ENCODE measurements at regions of chr12 and their contacts with region 1.

Region 1: DNA sequence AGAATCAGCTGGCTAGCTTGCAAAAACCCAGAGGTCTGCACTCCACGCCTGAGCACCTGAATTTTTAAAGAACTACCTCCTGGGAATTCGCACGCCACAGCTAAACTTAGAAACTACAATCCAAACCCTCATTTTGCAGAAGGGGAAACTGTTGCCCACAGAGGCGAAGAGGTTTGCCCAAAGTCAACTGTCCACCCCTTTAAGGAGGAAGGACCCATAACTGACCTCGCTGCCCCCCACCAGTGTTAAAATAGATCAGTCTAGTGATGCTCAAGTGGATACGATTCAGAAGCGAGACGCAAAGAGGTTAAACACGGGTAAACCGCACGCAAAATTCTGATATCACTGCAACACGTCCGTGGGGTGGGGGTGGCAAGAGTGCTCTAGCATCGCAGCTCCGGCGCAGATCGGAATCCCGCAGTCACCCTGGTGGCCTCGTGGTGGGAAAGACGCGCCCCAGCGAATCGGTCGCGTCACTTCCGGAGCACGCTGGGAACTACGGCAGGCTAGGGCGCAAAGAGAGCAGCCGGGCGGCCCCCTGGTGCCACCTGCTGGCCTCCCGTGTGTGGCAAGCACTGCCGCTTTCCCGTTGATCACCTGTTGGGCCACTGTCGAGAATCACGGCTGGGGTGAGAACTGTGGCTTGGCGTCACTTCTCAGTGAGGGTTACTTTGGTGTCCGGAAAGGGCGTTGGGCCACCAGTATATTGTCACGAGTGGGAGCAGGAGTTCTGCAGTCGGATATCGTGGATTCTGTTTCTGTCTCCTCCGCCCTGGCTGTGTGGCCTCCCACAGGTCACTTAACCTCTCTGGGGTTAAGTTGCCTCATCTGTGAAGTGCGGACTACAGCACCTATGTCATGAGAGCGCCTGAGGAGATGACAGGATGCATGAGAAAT is at the start of gene ALKBH2:
- DNase-seq: peak; percentile 94 to 95 (median 95)
- H3K4me3 ChIP-seq: peak within 1 kb of the TSS; percentile 42 to 70 (median 46)
- H3K4me3 Mint-ChIP-seq: peak within 1 kb of the TSS; percentile 77 to 87
- H3K27ac ChIP-seq: peak within 1 kb of the TSS; percentile 13 to 68
- H3K27ac Mint-ChIP-seq: peak within 1 kb of the TSS; percentile 75 to 92 (median 86)
- H3K4me1 ChIP-seq: peaks cover 23 to 28% of the 10 kb centered on the region in 2 donors
- H3K4me1 Mint-ChIP-seq: peaks cover 22% of the 10 kb centered on the region
- H3K27me3 ChIP-seq: no peaks in the 10 kb centered on the region
- H3K27me3 Mint-ChIP-seq: peaks cover 0 to 2% (median 0%) of the 10 kb centered on the region in 3 donors
- CTCF ChIP-seq: peak; percentile 98
- polyA plus RNA-seq, gene ALKBH2: 3.7 to 13.0 (median 4.5) TPM

Region 2: GRCh38 chr12:108618079-108618952 is 475.0 kb before region 1 on chr12:
- intact Hi-C with region 1: loop called (anchors 10 kb)
- DNase-seq: peak; percentile 68 to 77 (median 76)
- H3K4me3 ChIP-seq: no peak overlapping the region
- H3K4me3 Mint-ChIP-seq: no peak overlapping the region
- H3K27ac ChIP-seq: peak overlapping the region in 1 of 2 donors; percentile 7
- H3K27ac Mint-ChIP-seq: peak overlapping the region; percentile 37 to 94 (median 87)
- H3K4me1 ChIP-seq: peaks cover 48 to 60% of the 10 kb centered on the region in 2 donors
- H3K4me1 Mint-ChIP-seq: peaks cover 50% of the 10 kb centered on the region
- H3K27me3 ChIP-seq: no peaks in the 10 kb centered on the region
- H3K27me3 Mint-ChIP-seq: peaks cover 0 to 2% (median 0%) of the 10 kb centered on the region in 3 donors
- CTCF ChIP-seq: peak; percentile 99

Region 3: DNA sequence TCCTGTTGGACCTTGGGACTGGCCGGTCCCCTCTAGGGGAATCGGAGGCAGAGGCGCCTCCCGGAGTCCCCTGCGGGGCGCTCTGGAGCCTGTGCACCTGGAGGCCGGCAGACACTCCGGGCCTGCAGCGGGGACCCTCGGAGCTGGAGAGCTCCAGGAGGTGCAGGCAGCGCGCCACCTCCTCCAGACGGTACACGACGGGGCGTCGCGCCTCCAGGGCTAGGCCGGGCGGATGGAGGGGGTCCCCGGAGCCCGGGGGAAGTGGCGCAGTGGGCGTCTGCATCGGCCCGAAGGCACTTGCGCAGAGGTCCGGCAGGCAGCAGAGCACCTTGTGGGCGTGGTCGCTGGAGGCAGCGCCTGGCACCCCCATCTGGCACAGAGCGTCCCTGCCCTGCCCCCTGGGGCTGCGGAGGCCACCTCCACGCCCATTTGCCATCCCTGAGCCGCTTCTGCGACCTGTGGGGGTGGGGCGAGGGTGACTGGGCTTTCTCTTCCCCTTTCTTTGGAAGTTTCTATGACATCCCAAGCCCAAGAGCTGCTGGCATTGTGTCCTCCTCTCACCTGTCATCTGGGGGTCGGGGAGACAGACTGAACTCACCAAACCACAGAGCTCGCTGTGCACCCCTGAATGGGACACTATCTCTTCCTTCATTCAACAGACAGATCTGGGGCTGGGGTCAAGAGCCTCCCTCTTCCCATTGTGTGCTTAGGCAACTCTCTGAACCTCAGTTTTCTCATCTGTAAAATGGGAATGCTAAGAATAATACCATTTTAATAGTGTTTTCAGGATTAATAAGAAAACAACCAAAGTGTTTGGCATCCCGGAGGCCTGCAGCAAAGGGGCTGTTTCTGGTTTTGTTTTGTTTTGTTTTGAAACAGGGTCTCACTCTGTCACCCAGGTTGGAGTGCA is 324.4 kb before region 1 on chr12:
- intact Hi-C with region 1: no loop called
- DNase-seq: peak; percentile 47 to 73 (median 63)
- H3K4me3 ChIP-seq: peak overlapping the region in 2 of 3 experiments; percentile 10 to 66
- H3K4me3 Mint-ChIP-seq: peak overlapping the region; percentile 60 to 86
- H3K27ac ChIP-seq: no peak overlapping the region
- H3K27ac Mint-ChIP-seq: peak overlapping the region in 2 of 7 donors; percentile 70 to 80
- H3K4me1 ChIP-seq: peaks cover 12 to 14% of the 10 kb centered on the region in 2 donors
- H3K4me1 Mint-ChIP-seq: peaks cover 8% of the 10 kb centered on the region
- H3K27me3 ChIP-seq: no peaks in the 10 kb centered on the region
- H3K27me3 Mint-ChIP-seq: peaks cover 0 to 10% (median 9%) of the 10 kb centered on the region in 3 donors
- CTCF ChIP-seq: peak; percentile 21

Region 4: GRCh38 chr12:108816652-108817335 is 276.5 kb before region 1 on chr12:
- intact Hi-C with region 1: loop called in 1 of 2 experiments (anchors 10 kb)
- DNase-seq: no peak
- H3K4me3 ChIP-seq: no peak overlapping the region
- H3K4me3 Mint-ChIP-seq: no peak overlapping the region
- H3K27ac ChIP-seq: no peak overlapping the region
- H3K27ac Mint-ChIP-seq: peak overlapping the region in 5 of 7 donors; percentile 28 to 67 (median 58)
- H3K4me1 ChIP-seq: peaks cover 33 to 36% of the 10 kb centered on the region in 2 donors
- H3K4me1 Mint-ChIP-seq: peaks cover 34% of the 10 kb centered on the region
- H3K27me3 ChIP-seq: no peaks in the 10 kb centered on the region
- H3K27me3 Mint-ChIP-seq: peaks cover 0 to 1% (median 0%) of the 10 kb centered on the region in 3 donors
- CTCF ChIP-seq: no peak

Region 5: DNA sequence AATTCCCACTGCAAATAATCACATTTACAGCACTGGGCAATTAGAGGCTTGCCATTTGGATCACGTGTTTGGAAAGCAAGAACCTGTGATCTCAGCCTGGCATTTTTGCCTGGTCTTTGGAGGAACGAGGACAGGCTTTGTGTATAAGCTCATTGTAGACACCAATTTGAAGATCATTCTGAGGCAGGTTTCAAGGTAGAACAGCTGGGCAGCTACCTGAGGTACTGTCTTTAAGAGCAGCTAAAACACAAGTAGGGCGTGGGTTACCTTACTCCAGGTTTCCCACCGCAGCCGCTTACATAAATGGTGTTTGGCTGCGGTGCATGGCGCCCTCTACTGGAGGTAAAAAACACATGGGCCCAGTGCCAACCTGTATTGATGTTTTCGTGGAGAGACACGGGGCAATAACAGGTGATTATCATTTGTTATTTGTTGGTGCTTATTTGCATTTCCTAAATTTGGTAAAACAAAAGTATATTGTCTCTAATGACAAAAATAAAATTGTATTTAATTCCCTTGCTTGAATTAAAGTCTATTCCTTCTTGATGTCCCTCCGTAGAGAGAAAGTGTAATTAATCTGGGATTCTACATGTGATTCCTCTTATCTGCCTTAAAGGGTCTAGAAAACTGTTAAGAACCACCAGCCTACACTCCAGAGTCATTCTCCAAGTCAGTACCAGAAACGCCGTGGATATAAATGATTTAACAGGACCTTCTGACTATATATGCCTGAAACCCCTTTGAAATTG is 142.1 kb before region 1 on chr12:
- intact Hi-C with region 1: loop called in 1 of 2 experiments (anchors 10 kb)
- DNase-seq: peak; percentile 61 to 74 (median 66)
- H3K4me3 ChIP-seq: no peak overlapping the region
- H3K4me3 Mint-ChIP-seq: no peak overlapping the region
- H3K27ac ChIP-seq: no peak overlapping the region
- H3K27ac Mint-ChIP-seq: peak overlapping the region in 4 of 7 donors; percentile 18 to 45 (median 30)
- H3K4me1 ChIP-seq: peaks cover 21 to 29% of the 10 kb centered on the region in 2 donors
- H3K4me1 Mint-ChIP-seq: peaks cover 25% of the 10 kb centered on the region
- H3K27me3 ChIP-seq: no peaks in the 10 kb centered on the region
- H3K27me3 Mint-ChIP-seq: peaks cover 7 to 10% (median 10%) of the 10 kb centered on the region in 3 donors
- CTCF ChIP-seq: peak; percentile 97

Region 6: GRCh38 chr12:109165599-109165998 is 72.3 kb after region 1 on chr12:
- intact Hi-C with region 1: no loop called
- DNase-seq: peak in 2 of 3 donors; percentile 20 to 24
- H3K4me3 ChIP-seq: no peak overlapping the region
- H3K4me3 Mint-ChIP-seq: no peak overlapping the region
- H3K27ac ChIP-seq: no peak overlapping the region
- H3K27ac Mint-ChIP-seq: peak overlapping the region in 4 of 7 donors; percentile 26 to 76 (median 58)
- H3K4me1 ChIP-seq: peaks cover 10 to 12% of the 10 kb centered on the region in 2 donors
- H3K4me1 Mint-ChIP-seq: peaks cover 25% of the 10 kb centered on the region
- H3K27me3 ChIP-seq: no peaks in the 10 kb centered on the region
- H3K27me3 Mint-ChIP-seq: no peaks in the 10 kb centered on the region
- CTCF ChIP-seq: no peak

Region 7: DNA sequence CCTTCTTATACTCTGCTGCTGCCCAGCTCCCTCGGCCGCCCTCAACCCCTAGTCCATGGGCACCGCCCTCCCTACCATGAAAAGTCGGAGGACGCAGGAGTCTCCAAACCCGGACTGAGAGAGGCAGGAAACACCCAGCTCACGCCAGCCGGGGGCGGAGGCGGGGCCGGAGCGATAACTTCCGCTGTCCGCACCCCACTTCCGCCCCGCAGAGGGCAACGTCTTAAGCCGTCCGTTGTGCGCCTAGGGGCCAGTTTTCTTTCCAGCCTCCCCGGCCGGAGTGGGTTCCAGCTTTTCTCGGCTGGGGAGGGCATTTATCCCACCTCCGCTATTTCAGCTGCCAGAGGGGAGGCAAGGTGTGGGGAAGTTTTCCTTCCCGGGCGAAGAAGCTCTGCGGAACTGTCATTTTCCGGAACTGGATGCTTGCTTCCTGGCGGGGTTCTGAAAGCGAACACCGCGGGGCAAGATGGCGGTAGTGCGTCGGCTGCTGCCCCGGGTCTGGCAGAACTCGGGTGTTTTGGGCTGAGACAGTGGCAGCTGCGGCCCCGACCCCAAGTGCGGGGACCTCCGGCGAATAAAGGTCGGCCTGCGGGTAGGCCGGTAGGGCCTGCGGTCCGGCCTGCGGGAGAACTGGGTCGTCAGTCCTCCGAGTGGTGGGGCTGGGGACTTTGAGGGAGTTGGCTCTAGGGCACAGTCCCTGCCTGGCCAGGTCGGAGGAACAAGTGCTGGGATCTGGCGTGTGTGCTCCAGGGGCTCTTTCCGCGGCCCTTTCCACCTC is 384.1 kb after region 1 on chr12 and contains the starts of genes KCTD10 and UBE3B:
- intact Hi-C with region 1: loop called in 1 of 2 experiments (anchors 5 kb)
- DNase-seq: peak; percentile 88 to 90 (median 88)
- H3K4me3 ChIP-seq: peak within 1 kb of the TSS; percentile 74 to 95 (median 81)
- H3K4me3 Mint-ChIP-seq: peak within 1 kb of the TSS; percentile 93 to 96
- H3K27ac ChIP-seq: peak within 1 kb of the TSS; percentile 85 to 93
- H3K27ac Mint-ChIP-seq: peak within 1 kb of the TSS; percentile 92 to 100 (median 100)
- H3K4me1 ChIP-seq: peaks cover 20 to 28% of the 10 kb centered on the region in 2 donors
- H3K4me1 Mint-ChIP-seq: peaks cover 24% of the 10 kb centered on the region
- H3K27me3 ChIP-seq: no peaks in the 10 kb centered on the region
- H3K27me3 Mint-ChIP-seq: no peaks in the 10 kb centered on the region
- CTCF ChIP-seq: no peak
- polyA plus RNA-seq, gene KCTD10: 18.1 to 21.0 (median 20.0) TPM
- polyA plus RNA-seq, gene UBE3B: 14.4 to 25.9 (median 18.2) TPM

Measured in CD14-positive monocyte (primary cell).